B cell (primary cell): ENCODE measurements at regions of chr6 and their contacts with region 1.

Region 1: DNA sequence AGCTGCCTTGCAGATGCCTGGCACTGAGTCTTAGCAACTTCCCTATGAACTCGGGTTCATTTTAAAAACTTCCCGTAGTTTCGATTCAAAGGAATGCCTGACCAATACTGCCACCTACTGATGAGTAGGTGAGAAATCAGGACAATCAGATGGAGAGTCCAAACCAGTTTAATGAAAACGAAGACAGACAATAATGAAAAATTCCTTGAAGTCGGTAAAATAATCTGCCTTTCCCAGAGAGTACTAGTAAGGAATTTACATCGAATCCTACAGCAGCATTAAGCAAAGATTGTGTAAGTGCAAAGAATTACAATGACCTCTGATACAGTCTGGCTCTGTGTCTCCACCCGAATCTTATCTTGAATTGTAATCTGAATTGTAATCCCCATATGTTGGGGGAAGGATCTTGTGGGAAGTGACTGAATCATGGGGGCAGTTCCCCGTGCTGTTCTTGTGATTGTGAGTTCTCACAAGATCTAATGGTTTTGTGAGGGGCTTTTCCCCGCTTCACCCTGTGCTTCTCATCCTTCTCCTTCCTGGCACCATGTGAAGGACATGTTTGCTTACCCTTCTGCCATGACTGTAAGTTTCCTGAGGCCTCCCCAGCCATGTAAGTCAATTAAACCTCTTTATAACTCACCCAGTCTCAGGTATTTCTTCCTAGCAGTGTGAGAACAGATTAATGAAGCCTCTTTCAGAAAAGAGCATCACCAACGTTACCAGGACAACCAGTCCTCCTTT is 134.4 kb downstream of the ARHGAP18 start:
- DNase-seq: peak; percentile 21
- ATAC-seq: peak; percentile 21
- H3K4me3 ChIP-seq: no peak overlapping the region
- H3K4me3 Mint-ChIP-seq: no peak overlapping the region
- H3K27ac ChIP-seq: no peak overlapping the region
- H3K27ac Mint-ChIP-seq: no peak overlapping the region
- H3K4me1 ChIP-seq: peaks cover 0 to 6% of the 10 kb centered on the region in 2 donors
- H3K4me1 Mint-ChIP-seq: peaks cover 8% of the 10 kb centered on the region
- H3K27me3 ChIP-seq: no peaks in the 10 kb centered on the region
- H3K27me3 Mint-ChIP-seq: no peaks in the 10 kb centered on the region
- CTCF ChIP-seq: peak; percentile 53

Region 2: DNA sequence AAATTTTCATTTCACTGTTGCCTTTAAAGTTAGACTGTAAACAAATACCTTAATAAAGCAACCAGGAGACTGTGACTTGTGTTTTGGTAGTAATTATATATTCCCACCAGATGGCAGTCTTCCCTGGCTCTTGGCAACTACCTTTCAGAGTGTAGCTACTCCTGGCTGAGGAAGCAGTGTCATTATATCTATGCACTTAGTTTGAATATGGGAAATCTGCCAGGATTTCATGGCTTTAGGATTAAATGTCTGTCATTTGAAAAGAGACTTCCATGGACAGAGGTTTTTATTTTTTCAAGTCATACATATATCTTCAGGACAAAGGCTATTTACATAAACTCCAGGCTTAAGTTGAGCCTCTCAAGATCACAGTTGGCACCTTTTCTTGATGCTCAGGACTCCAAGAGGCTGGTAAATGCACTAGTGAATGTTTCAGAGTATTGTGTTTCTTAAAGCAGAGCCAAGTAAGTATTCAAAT is 1838.5 kb before region 1 on chr6:
- CTCF ChIA-PET with region 1: no interaction called
- POLR2A ChIA-PET with region 1: no interaction called
- intact Hi-C with region 1: loop called (anchors 10 kb)
- DNase-seq: peak; percentile 54
- ATAC-seq: no peak
- H3K4me3 ChIP-seq: no peak overlapping the region
- H3K4me3 Mint-ChIP-seq: no peak overlapping the region
- H3K27ac ChIP-seq: no peak overlapping the region
- H3K27ac Mint-ChIP-seq: no peak overlapping the region
- H3K4me1 ChIP-seq: no peaks in the 10 kb centered on the region
- H3K4me1 Mint-ChIP-seq: no peaks in the 10 kb centered on the region
- H3K27me3 ChIP-seq: no peaks in the 10 kb centered on the region
- H3K27me3 Mint-ChIP-seq: peaks cover 7% of the 10 kb centered on the region
- CTCF ChIP-seq: peak; percentile 79

Region 3: GRCh38 chr6:128725271-128726233 is 850.0 kb before region 1 on chr6:
- CTCF ChIA-PET with region 1: no interaction called
- POLR2A ChIA-PET with region 1: no interaction called
- intact Hi-C with region 1: loop called (anchors 5 kb)
- DNase-seq: peak; percentile 8
- ATAC-seq: no peak
- H3K4me3 ChIP-seq: no peak overlapping the region
- H3K4me3 Mint-ChIP-seq: no peak overlapping the region
- H3K27ac ChIP-seq: no peak overlapping the region
- H3K27ac Mint-ChIP-seq: no peak overlapping the region
- H3K4me1 ChIP-seq: no peaks in the 10 kb centered on the region
- H3K4me1 Mint-ChIP-seq: no peaks in the 10 kb centered on the region
- H3K27me3 ChIP-seq: no peaks in the 10 kb centered on the region
- H3K27me3 Mint-ChIP-seq: no peaks in the 10 kb centered on the region
- CTCF ChIP-seq: peak; percentile 65

Region 4: GRCh38 chr6:129598244-129599187 is 23.0 kb after region 1 on chr6:
- CTCF ChIA-PET with region 1: no interaction called
- POLR2A ChIA-PET with region 1: no interaction called
- intact Hi-C with region 1: no loop called
- DNase-seq: peak; percentile 81
- ATAC-seq: peak; percentile 76
- H3K4me3 ChIP-seq: no peak overlapping the region
- H3K4me3 Mint-ChIP-seq: no peak overlapping the region
- H3K27ac ChIP-seq: no peak overlapping the region
- H3K27ac Mint-ChIP-seq: no peak overlapping the region
- H3K4me1 ChIP-seq: peaks cover 5 to 9% of the 10 kb centered on the region in 2 donors
- H3K4me1 Mint-ChIP-seq: peaks cover 8% of the 10 kb centered on the region
- H3K27me3 ChIP-seq: no peaks in the 10 kb centered on the region
- H3K27me3 Mint-ChIP-seq: no peaks in the 10 kb centered on the region
- CTCF ChIP-seq: peak; percentile 91